Panc1 (cell line): ENCODE measurements at regions of chr17 and their contacts with region 1.

Region 1: GRCh38 chr17:48678141-48678971 is 44.0 kb downstream of the PRAC1 start:
- DNase-seq: no peak
- ATAC-seq: peak; percentile 95
- H3K4me3 ChIP-seq: peak overlapping the region; percentile 11 to 42
- H3K27ac ChIP-seq: no peak overlapping the region
- H3K4me1 ChIP-seq: no peaks in the 10 kb centered on the region; the same call in 1 of the 2 replicates
- H3K27me3 ChIP-seq: no peaks in the 10 kb centered on the region
- CTCF ChIP-seq: peak; percentile 100

Region 2: GRCh38 chr17:48724251-48725003 is 46.1 kb after region 1 on chr17:
- CTCF ChIA-PET with region 1: interaction called, 23 read pairs
- POLR2A ChIA-PET with region 1: no interaction called
- in situ Hi-C with region 1: no loop called
- intact Hi-C with region 1: loop called (anchors 5 kb)
- DNase-seq: peak; percentile 22
- ATAC-seq: peak; percentile 85
- H3K4me3 ChIP-seq: peak overlapping the region in 1 of 2 experiments; percentile 4; a peak in 1 of 4 replicates
- H3K27ac ChIP-seq: no peak overlapping the region
- H3K4me1 ChIP-seq: peaks cover 3% of the 10 kb centered on the region; the same call in 1 of the 2 replicates
- H3K27me3 ChIP-seq: no peaks in the 10 kb centered on the region
- CTCF ChIP-seq: peak; percentile 95

Region 3: GRCh38 chr17:48791128-48792032 is 113.0 kb after region 1 on chr17:
- CTCF ChIA-PET with region 1: interaction called, 38 read pairs
- POLR2A ChIA-PET with region 1: no interaction called
- in situ Hi-C with region 1: no loop called
- intact Hi-C with region 1: loop called (anchors 2 kb)
- DNase-seq: peak; percentile 75
- ATAC-seq: peak; percentile 95
- H3K4me3 ChIP-seq: peak overlapping the region; percentile 7 to 23; a peak in 3 of 4 replicates
- H3K27ac ChIP-seq: peak overlapping the region; percentile 73
- H3K4me1 ChIP-seq: peaks cover 23% of the 10 kb centered on the region
- H3K27me3 ChIP-seq: no peaks in the 10 kb centered on the region
- CTCF ChIP-seq: peak; percentile 96

Region 4: GRCh38 chr17:48804925-48805411 is 126.6 kb after region 1 on chr17:
- CTCF ChIA-PET with region 1: interaction called, 12 read pairs
- POLR2A ChIA-PET with region 1: no interaction called
- in situ Hi-C with region 1: no loop called
- intact Hi-C with region 1: no loop called
- DNase-seq: no peak
- ATAC-seq: peak; percentile 97
- H3K4me3 ChIP-seq: no peak overlapping the region
- H3K27ac ChIP-seq: no peak overlapping the region
- H3K4me1 ChIP-seq: peaks cover 3% of the 10 kb centered on the region; the same call in 1 of the 2 replicates
- H3K27me3 ChIP-seq: no peaks in the 10 kb centered on the region; the same call in 1 of the 2 replicates
- CTCF ChIP-seq: peak; percentile 99

Region 5: DNA sequence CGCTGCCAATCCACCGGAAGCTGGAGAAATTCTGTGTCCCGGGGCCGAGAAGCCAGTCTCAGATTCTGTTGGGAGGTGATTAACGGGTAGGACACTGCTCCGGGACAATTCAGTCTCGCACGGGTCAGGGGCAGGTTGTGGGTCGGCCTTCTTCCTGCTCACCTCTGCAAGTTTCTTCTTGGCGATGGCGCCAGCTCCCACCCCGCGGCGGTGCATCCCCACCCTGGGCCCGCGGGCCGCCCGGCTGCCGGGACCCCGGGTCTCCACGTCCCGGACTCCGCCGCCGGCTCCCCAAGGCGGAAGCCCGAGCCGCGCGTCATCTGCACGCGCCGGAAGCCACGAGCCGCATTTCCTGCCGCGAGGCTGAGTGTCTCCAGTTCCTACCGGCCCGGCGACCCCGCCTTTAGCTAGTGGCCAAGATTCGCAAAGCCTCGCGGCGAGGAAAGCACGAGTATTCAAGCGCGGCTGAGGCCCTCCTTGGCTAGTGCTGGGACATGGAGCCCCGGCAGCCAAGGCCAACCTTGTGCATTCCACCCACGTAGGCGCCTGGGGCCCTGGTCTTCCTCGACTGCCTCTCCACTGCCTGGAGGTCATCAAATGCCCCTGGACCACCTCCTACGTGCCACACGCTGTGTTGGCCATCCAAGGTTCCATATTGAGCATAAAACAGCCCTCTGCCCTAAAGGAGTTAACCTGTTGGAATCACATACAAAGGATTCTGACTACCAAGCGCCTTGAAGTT is 266.3 kb after region 1 on chr17 and contains the start of gene SNF8:
- CTCF ChIA-PET with region 1: interaction called, 12 read pairs
- POLR2A ChIA-PET with region 1: no interaction called
- in situ Hi-C with region 1: no loop called
- intact Hi-C with region 1: no loop called
- DNase-seq: no peak
- ATAC-seq: peak; percentile 98
- H3K4me3 ChIP-seq: peak within 1 kb of the TSS; percentile 60 to 100
- H3K27ac ChIP-seq: peak within 1 kb of the TSS; percentile 98
- H3K4me1 ChIP-seq: peaks cover 10% of the 10 kb centered on the region
- H3K27me3 ChIP-seq: no peaks in the 10 kb centered on the region
- CTCF ChIP-seq: no peak
- total RNA-seq, gene SNF8: 371 TPM